T-cell (primary cell): ENCODE measurements at regions of chr12 and their contacts with region 1.

Region 1: DNA sequence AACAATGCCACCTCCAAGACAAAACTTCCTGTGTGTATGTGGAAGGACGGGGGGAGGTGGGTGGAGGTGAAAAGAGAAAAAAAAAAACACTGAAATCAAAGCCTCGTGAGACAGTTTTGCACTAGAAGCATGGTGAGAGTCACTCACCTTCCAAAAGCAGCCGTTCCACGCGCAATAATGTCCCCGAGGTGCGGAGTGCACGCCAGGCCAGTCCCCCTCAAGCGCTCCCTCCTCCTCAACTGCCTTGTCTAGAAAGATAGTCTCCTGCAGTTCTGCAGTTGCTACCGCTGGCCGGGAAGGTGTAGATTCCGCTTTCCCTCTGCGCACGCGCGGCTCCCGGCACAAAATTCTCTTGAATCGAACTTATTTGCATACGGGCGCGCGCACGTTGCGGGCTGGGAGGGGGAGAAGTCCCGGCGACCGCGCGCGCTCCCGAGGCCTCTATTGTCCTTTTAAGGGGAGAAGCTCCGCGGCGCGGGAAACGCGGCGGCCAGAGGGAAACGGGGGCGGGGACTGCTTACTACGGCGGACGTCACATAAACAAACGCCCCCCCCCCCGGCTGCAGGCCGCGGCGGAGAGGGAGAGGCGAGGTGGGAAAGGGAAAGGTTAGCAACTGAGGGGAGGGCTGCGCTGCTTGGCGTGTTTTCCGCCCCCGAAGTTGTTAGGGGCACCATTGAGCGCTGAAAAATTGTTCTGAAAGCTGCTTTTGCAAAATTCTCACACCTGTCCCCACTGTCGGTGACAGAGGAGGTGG is at the start of gene SINHCAF:
- DNase-seq: peak; percentile 96 to 100 (median 98)
- ATAC-seq: peak; percentile 63 to 68 (median 64)
- H3K4me3 ChIP-seq: peak within 1 kb of the TSS; percentile 88 to 97
- H3K4me3 Mint-ChIP-seq: peak within 1 kb of the TSS; percentile 88 to 98 (median 92)
- H3K27ac ChIP-seq: peak within 1 kb of the TSS; percentile 87
- H3K27ac Mint-ChIP-seq: peak within 1 kb of the TSS; percentile 93 to 94
- H3K4me1 ChIP-seq: peaks cover 8 to 19% of the 10 kb centered on the region in 2 experiments
- H3K4me1 Mint-ChIP-seq: peaks cover 25 to 40% (median 34%) of the 10 kb centered on the region in 3 donors
- H3K27me3 ChIP-seq: no peaks in the 10 kb centered on the region
- H3K27me3 Mint-ChIP-seq: no peaks in the 10 kb centered on the region
- total RNA-seq, gene SINHCAF: 70.3 to 93.2 (median 85.0) TPM

Region 2: DNA sequence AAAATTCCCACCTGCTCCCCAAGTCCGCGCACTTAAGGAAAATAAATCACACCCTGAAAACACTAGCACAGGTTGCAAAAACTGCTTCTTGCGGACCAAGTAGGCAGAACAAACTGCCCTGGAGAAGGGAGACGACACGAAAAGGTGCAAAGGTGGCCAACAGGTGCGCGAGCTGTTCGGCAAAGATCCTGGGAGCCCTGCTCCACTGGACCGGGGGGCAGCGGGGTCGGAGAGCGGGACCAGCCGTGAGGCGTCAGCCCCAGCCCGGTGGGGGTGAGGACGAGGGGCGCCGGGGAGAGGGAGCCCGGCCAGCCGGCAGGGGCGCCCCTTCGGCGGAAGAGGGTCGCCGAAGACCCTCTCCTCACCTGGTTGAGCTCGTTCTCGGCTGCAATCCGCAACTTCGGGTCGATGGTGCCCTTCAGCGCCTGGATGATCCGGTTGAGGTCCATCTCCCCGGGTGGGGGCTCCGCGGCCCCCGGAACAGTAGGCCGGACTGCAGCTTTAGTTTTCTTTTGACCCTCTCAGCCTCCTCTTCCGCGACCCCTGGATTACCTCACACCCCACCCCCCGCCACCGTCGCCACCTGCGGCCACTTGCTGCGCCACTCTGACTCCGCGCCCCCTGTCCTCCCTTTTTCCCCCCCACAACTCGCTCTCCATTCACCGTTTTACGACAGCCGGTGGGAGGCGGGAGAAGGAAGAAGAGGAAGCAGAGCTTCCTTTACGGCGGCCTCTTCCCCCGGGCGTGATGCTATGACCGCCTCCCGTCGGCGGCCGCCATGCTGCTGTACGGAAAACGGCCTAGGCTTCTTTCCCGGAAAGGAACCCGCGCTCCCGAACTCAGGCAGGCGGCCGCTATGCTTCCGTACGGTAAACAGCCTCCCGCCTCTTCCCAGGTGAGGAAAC is 630.6 kb before region 1 on chr12 and contains the start of gene IPO8:
- CTCF ChIA-PET with region 1: no interaction called
- POLR2A ChIA-PET with region 1: interaction called, 5 to 17 read pairs
- DNase-seq: peak; percentile 67 to 89 (median 81)
- ATAC-seq: peak; percentile 90 to 93 (median 90)
- H3K4me3 ChIP-seq: peak within 1 kb of the TSS; percentile 88 to 92
- H3K4me3 Mint-ChIP-seq: peak within 1 kb of the TSS; percentile 95 to 97 (median 96)
- H3K27ac ChIP-seq: peak within 1 kb of the TSS; percentile 61
- H3K27ac Mint-ChIP-seq: peak within 1 kb of the TSS; percentile 87 to 93
- H3K4me1 ChIP-seq: peaks cover 17 to 21% of the 10 kb centered on the region in 2 experiments
- H3K4me1 Mint-ChIP-seq: peaks cover 45 to 50% (median 48%) of the 10 kb centered on the region in 3 donors
- H3K27me3 ChIP-seq: no peaks in the 10 kb centered on the region
- H3K27me3 Mint-ChIP-seq: no peaks in the 10 kb centered on the region
- total RNA-seq, gene IPO8: 29.9 to 54.9 (median 45.1) TPM

Region 3: DNA sequence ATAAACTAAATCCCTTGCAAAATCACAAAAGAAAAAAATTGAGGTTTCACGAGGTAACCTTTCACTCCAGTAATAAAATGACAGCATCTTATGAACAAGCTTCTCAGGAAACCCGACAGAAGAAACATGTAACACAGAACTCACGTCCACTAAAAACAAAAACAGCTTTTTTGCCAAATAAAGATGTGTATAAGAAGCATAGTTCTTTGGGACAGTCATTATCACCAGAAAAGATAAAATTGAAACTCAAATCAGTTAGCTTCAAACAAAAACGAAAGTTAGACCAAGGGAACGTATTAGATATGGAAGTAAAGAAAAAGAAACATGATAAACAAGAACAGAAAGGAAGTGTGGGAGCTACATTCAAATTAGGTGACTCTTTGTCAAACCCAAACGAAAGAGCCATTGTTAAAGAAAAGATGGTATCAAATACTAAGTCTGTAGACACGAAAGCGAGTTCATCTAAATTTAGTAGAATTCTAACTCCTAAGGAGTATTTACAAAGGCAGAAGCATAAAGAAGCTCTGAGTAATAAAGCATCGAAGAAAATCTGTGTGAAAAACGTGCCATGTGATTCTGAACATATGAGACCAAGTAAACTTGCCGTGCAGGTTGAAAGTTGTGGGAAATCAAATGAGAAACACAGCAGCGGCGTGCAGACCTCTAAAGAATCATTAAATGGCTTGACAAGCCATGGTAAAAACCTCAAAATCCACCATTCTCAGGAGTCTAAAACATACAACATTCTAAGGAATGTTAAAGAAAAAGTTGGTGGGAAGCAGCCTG is 658.9 kb after region 1 on chr12:
- CTCF ChIA-PET with region 1: no interaction called
- POLR2A ChIA-PET with region 1: interaction called in 1 of 2 experiments, 11 read pairs
- DNase-seq: no peak
- ATAC-seq: no peak
- H3K4me3 ChIP-seq: peak overlapping the region in 1 of 2 donors; percentile 6
- H3K4me3 Mint-ChIP-seq: peak overlapping the region in 2 of 3 donors; percentile 2 to 26
- H3K27ac ChIP-seq: peak overlapping the region; percentile 22
- H3K27ac Mint-ChIP-seq: peak overlapping the region; percentile 59 to 73
- H3K4me1 ChIP-seq: peaks cover 0 to 3% of the 10 kb centered on the region in 2 experiments
- H3K4me1 Mint-ChIP-seq: peaks cover 55 to 74% (median 64%) of the 10 kb centered on the region in 3 donors
- H3K27me3 ChIP-seq: no peaks in the 10 kb centered on the region
- H3K27me3 Mint-ChIP-seq: no peaks in the 10 kb centered on the region